Heart right ventricle (tissue), 16 donors: ENCODE measurements at regions of chr16 and their contacts with region 1.

Region 1: DNA sequence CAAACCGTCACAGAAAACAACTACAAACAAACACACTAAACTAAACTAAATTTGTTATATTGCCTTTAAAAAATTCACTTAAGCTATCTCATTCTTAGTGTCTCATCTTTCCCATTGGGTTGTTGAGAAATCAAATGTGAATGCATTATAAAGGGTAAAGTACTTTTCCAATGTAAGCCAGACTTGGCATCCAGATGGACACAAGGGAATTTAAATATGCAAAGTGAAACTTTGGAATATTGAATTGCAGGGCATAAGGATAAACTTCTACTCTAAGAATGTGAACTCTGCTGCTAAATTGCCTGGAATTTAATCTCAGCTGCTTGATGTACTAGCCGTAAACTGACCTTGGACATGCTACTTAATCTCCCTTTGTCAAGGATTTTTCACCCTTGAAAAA is 1554.6 kb downstream of the CDH8 start:
- DNase-seq: no peak
- ATAC-seq: no peak
- H3K4me3 ChIP-seq: no peak overlapping the region
- H3K27ac ChIP-seq: no peak overlapping the region
- H3K4me1 ChIP-seq: no peaks in the 10 kb centered on the region
- H3K27me3 ChIP-seq: no peaks in the 10 kb centered on the region
- CTCF ChIP-seq: no peak

Region 2: GRCh38 chr16:61131447-61131846 is 649.9 kb after region 1 on chr16:
- intact Hi-C with region 1: loop called in 1 of 10 experiments (anchors 5 kb)
- DNase-seq: no peak
- ATAC-seq: no peak
- H3K4me3 ChIP-seq: no peak overlapping the region
- H3K27ac ChIP-seq: no peak overlapping the region
- H3K4me1 ChIP-seq: no peaks in the 10 kb centered on the region
- H3K27me3 ChIP-seq: no peaks in the 10 kb centered on the region
- CTCF ChIP-seq: no peak